Activated T-helper 2 cell treated with anti-CD3 and anti-CD28 coated beads, Interferon-gamma antibody, Interleukin-2, Interleukin-4, amounts not matched to agents 10 μg/mL and 5 μg/mL and 100 μg/mL, durations not matched to agents 14 hours and 24 hours and 36 hours (primary cell): ENCODE measurements at regions of chr6 and their contacts with region 1.

Region 1: DNA sequence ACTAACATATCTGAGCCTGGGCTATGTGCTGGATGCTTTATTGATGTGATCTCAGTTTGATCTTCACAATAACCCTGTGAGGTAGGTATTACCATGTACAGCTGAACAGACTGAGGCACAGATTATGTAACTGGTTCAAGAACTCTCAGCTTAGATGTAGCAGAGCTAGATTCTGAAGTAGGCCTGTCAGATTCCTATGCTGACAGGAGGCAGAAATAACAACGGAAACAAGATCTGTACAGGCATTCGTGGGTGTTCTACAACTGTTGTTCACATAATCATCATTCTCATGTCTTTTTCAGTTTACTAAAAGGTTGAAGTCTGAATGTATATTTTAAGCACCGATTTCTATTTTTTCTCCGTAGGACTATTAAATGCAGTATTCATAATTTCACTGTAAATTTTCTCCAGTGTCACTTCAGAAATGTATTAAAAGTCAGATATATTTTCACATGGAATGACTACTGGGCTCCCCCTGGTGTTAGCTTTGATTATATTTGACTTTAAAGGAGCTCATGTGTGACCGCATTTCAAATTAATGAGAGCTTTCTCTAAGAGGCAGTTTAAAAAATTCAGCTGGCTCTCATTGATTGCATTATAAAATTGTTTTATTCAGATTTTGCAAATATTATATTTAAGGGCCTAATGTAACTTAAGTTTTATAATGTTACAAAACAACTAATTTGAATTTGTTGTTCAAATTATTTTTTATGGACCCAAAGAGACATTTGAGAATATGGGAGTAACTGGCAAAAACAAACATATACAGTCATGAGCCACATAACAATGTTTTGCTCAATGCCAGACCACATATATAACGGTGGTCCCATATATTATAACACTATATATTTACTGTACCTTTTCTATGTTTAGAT is 36.4 kb upstream of the SLC17A4 start:
- DNase-seq: no peak
- H3K4me3 Mint-ChIP-seq: no peak overlapping the region
- H3K27ac Mint-ChIP-seq: no peak overlapping the region
- H3K4me1 Mint-ChIP-seq: peaks cover 2% of the 10 kb centered on the region
- H3K27me3 Mint-ChIP-seq: peaks cover 10% of the 10 kb centered on the region

Region 2: DNA sequence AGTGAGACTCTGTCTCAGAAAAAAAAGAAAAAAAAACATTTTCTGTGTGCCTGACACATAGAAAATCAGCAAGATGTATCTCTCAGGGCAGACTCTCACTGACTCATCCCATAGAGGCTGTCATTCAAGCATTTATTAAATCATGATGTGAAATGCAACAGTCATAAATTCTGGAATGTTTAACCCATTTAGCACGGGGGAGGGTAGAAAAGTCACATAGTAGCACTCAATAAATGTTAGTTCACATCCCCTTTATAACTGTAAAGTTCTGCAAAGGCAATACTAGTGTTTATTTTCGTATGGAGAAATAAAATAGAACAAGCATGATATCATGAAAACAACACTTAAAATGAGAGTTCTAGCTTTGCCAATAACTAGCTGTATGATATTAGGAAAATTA is 454.4 kb before region 1 on chr6:
- intact Hi-C with region 1: no loop called
- DNase-seq: no peak
- H3K4me3 Mint-ChIP-seq: no peak overlapping the region
- H3K27ac Mint-ChIP-seq: no peak overlapping the region
- H3K4me1 Mint-ChIP-seq: peaks cover 2% of the 10 kb centered on the region
- H3K27me3 Mint-ChIP-seq: peaks cover 23% of the 10 kb centered on the region

Region 3: DNA sequence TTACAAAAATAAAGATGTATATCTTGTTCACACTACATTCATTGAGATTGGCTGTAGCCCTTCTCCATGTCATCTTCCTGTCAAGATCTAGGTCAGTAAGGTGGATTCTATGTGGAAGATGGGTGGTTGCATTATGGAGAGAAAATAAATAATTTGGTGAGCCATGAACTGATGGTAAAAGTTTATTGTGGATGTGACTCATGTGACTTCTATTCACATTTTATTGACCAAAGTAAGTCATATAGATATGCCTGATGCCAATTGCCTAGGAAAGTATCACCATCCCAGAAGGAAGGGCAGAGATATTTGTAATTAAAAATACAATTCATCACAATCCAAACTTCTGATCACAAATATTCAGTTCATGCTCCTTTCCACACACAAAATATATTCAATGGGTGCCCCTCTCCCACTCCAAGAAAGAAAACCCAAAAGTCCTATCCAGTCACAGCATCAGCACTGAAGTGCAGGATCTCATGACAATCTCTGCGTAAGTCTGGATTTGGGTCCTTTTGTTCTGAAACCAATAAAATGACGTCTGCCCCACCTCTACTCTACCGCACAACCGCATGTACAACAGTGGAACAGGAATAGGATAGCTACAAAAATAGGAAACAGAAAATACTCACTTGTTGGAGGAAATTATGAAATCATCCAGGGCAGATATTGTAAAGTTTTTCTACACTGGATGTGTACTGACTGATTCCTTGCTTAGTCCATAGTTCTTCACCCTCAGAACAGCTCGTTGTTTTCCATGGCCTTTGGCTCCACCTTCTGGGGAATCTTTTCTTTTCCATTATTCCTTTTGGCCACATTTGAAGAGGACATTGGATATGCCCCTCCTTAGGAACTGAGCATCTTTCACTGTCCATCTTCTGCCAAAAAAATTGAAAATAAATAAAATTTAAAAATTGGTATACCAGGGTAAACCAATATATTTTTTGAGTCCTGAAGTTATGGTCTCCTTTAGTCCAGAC is 172.1 kb after region 1 on chr6:
- intact Hi-C with region 1: loop called (anchors 1 kb)
- DNase-seq: no peak
- H3K4me3 Mint-ChIP-seq: no peak overlapping the region
- H3K27ac Mint-ChIP-seq: no peak overlapping the region
- H3K4me1 Mint-ChIP-seq: peaks cover 8% of the 10 kb centered on the region
- H3K27me3 Mint-ChIP-seq: peaks cover 4% of the 10 kb centered on the region